SK-N-SH (cell line): ENCODE measurements at regions of chr11 and their contacts with region 1.

Region 1: GRCh38 chr11:64767344-64768299 is 7.8 kb upstream of the PYGM start:
- DNase-seq: peak; percentile 76
- H3K4me3 ChIP-seq: no peak overlapping the region; a peak in 1 of 4 replicates
- H3K27ac ChIP-seq: no peak overlapping the region; a peak in 1 of 4 replicates
- H3K4me1 ChIP-seq: peaks cover 11 to 19% of the 10 kb centered on the region in 2 experiments; a peak in 3 of 4 replicates
- H3K27me3 ChIP-seq: no peaks in the 10 kb centered on the region
- CTCF ChIP-seq: peak; percentile 83
- EP300 ChIP-seq: no peak
- RAD21 ChIP-seq: peak; percentile 45

Region 2: DNA sequence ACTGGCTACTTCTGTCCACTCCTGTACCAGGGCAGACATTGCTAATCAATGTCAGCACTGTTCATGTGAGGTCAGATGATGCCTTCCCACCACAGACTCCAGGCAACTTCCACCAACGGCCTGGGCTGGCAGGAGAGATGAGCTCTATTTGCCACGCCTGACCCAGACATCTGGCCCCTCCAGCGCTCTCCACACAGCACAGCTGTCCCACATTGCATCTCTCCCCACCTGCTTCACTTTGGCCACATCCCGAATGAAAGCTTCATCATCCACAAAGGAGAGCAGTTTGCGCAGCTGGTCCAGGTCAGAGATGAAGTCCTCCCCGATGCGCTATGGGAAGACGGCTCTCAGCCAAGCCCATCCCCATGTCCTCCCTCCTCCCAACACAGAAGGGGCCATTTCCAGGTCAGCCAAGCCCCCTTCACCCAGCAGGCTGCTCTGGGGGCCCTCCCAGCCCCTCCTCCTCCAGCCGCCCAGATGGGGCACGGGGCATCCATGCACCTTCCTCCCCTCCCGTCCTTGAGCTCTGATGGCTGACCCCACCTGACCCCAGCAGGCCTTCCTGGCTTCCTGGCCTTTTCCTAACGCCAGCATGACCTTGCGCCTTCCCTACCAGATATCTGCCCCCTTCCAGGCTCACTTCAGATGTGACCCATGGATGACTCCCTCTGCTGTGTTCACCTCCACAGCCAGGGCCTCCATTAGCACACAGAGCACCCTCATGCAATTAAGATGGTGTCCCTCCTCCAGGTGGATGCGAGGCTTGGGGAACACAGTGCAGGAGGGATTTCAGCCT is 15.2 kb before region 1 on chr11:
- CTCF ChIA-PET with region 1: interaction called, 15 read pairs
- POLR2A ChIA-PET with region 1: no interaction called
- DNase-seq: no peak
- H3K4me3 ChIP-seq: no peak overlapping the region
- H3K27ac ChIP-seq: no peak overlapping the region
- H3K4me1 ChIP-seq: no peaks in the 10 kb centered on the region; a peak in 1 of 4 replicates
- H3K27me3 ChIP-seq: no peaks in the 10 kb centered on the region
- CTCF ChIP-seq: no peak
- EP300 ChIP-seq: no peak
- RAD21 ChIP-seq: no peak

Region 3: GRCh38 chr11:64778508-64779346 is 11.1 kb after region 1 on chr11 and contains the start of gene SF1:
- CTCF ChIA-PET with region 1: interaction called, 47 read pairs
- POLR2A ChIA-PET with region 1: interaction called, 3 read pairs
- DNase-seq: peak; percentile 95
- H3K4me3 ChIP-seq: peak within 1 kb of the TSS; percentile 77 to 83
- H3K27ac ChIP-seq: peak within 1 kb of the TSS; percentile 91 to 95
- H3K4me1 ChIP-seq: peaks cover 17 to 19% of the 10 kb centered on the region in 2 experiments
- H3K27me3 ChIP-seq: no peaks in the 10 kb centered on the region
- CTCF ChIP-seq: no peak
- EP300 ChIP-seq: no peak; a peak in 2 of 4 replicates
- RAD21 ChIP-seq: no peak
- polyA plus RNA-seq, gene SF1: 59.4 and 66.3 TPM in 2 replicates

Region 4: GRCh38 chr11:64960719-64961118 is 193.1 kb after region 1 on chr11:
- CTCF ChIA-PET with region 1: no interaction called
- POLR2A ChIA-PET with region 1: no interaction called
- DNase-seq: peak; percentile 54
- H3K4me3 ChIP-seq: no peak overlapping the region
- H3K27ac ChIP-seq: no peak overlapping the region
- H3K4me1 ChIP-seq: peaks cover 0 to 3% of the 10 kb centered on the region in 2 experiments; a peak in 1 of 4 replicates
- H3K27me3 ChIP-seq: no peaks in the 10 kb centered on the region
- CTCF ChIP-seq: no peak
- EP300 ChIP-seq: no peak
- RAD21 ChIP-seq: no peak